Activated naive CD4-positive, alpha-beta T cell treated with anti-CD3 and anti-CD28 coated beads for 36 hours (primary cell): ENCODE measurements at regions of chr12 and their contacts with region 1.

Region 1: DNA sequence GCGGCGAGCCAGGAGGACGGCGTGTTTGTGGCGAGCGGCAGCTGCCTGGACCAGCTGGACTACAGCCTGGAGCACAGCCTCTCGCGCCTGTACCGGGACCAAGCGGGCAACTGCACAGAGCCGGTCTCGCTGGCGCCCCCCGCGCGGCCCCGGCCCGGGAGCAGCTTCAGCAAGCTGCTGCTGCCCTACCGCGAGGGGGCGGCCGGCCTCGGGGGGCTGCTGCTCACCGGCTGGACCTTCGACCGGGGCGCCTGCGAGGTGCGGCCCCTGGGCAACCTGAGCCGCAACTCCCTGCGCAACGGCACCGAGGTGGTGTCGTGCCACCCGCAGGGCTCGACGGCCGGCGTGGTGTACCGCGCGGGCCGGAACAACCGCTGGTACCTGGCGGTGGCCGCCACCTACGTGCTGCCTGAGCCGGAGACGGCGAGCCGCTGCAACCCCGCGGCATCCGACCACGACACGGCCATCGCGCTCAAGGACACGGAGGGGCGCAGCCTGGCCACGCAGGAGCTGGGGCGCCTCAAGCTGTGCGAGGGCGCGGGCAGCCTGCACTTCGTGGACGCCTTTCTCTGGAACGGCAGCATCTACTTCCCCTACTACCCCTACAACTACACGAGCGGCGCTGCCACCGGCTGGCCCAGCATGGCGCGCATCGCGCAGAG is 873 bp downstream of the PLXNC1 start:
- DNase-seq: peak; percentile 42
- H3K4me3 Mint-ChIP-seq: peak overlapping the region; percentile 80
- H3K27ac Mint-ChIP-seq: no peak overlapping the region
- H3K4me1 Mint-ChIP-seq: peaks cover 23% of the 10 kb centered on the region
- H3K27me3 Mint-ChIP-seq: peaks cover 9% of the 10 kb centered on the region

Region 2: DNA sequence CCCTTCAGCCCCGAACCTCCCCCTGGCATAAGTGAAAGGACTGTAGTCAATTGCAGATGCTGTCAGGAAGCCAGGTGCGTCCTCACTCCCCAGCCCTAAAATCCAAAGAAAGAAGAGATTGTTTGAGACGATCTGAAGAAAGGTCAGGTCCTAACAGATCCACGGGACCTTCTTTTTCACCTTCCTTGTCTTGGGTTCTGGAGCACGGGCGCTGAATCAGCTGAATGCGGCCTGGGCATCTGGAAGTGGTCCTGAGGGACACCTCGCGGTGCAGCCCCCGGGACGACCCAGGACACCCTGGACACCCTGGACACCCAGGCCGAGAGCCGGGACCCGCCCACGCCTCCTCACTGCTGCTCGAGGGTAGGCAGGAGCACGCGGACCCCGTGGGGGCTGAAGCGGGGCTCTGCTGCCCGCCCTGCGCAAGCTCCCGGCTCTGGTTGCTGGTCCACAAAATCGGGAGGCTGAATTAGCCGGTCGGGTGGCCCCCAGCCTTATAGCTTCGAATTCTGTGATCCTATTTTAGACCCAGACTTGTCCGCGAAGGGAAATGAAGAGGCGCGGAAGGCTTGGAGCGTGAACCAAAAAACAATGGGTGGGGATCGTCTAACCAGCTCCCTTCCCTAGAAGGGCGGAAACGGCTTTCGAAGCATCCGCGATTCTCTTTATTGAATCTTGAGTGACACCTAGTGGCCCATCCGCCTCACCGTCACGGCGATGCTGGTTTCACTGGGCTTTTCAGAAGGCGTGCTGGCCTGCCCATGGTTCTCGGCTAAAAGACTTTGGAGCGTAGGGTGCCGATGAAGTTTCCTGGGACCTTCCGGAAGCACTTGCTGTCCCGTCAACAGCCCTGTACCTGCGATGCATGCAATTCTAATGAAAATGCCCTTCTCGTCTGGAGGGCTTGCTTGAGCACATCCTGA is 47.3 kb before region 1 on chr12:
- CTCF ChIA-PET with region 1: no interaction called
- intact Hi-C with region 1: no loop called
- DNase-seq: peak; percentile 93
- H3K4me3 Mint-ChIP-seq: peak overlapping the region; percentile 78
- H3K27ac Mint-ChIP-seq: peak overlapping the region; percentile 7
- H3K4me1 Mint-ChIP-seq: peaks cover 16% of the 10 kb centered on the region
- H3K27me3 Mint-ChIP-seq: no peaks in the 10 kb centered on the region

Region 3: GRCh38 chr12:94222351-94223084 is 73.3 kb after region 1 on chr12:
- CTCF ChIA-PET with region 1: no interaction called
- intact Hi-C with region 1: no loop called
- DNase-seq: no peak
- H3K4me3 Mint-ChIP-seq: no peak overlapping the region
- H3K27ac Mint-ChIP-seq: no peak overlapping the region
- H3K4me1 Mint-ChIP-seq: no peaks in the 10 kb centered on the region
- H3K27me3 Mint-ChIP-seq: no peaks in the 10 kb centered on the region

Region 4: DNA sequence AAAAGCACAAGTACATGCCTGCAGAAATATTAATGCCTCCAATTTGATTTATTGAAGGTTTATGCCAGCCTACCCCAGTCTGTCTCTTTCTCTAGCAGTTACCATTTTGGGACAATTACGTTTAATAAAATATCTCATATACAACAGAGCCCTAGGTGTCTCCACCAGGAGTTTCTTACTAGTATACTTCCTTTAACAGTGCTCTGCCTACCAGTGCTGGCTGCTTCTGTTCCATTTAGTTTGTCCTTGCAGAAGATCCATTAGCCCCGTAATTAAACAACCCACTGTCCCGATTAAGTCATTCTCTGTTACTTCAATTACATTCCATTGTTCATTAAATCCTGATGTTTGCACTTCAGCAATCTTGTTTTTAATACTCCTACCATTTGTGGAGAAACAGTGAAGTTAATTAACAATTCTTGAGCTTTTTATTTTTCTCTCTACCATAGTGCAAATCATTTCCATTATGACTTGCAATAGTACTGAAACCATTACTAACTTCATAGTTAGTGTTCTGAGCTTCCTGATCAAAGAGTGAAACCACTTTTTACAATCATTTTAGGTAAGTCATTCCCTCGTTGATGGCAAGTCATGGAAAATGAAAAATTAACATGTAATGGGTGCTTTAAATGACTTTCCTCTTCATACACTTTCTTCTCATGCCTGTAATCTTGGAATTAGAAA is 120.2 kb after region 1 on chr12:
- CTCF ChIA-PET with region 1: interaction called, 3 read pairs
- intact Hi-C with region 1: loop called (anchors 1 kb)
- DNase-seq: no peak
- H3K4me3 Mint-ChIP-seq: no peak overlapping the region
- H3K27ac Mint-ChIP-seq: peak overlapping the region; percentile 30
- H3K4me1 Mint-ChIP-seq: peaks cover 46% of the 10 kb centered on the region
- H3K27me3 Mint-ChIP-seq: no peaks in the 10 kb centered on the region

Region 5: GRCh38 chr12:94372461-94372860 is 223.2 kb after region 1 on chr12:
- CTCF ChIA-PET with region 1: no interaction called
- intact Hi-C with region 1: loop called (anchors 1 kb)
- DNase-seq: peak; percentile 7
- H3K4me3 Mint-ChIP-seq: no peak overlapping the region
- H3K27ac Mint-ChIP-seq: peak overlapping the region; percentile 66
- H3K4me1 Mint-ChIP-seq: peaks cover 23% of the 10 kb centered on the region
- H3K27me3 Mint-ChIP-seq: no peaks in the 10 kb centered on the region

Region 6: GRCh38 chr12:94459728-94460615 is 310.7 kb after region 1 on chr12 and contains the start of gene CEP83:
- CTCF ChIA-PET with region 1: no interaction called
- intact Hi-C with region 1: loop called (anchors 1 kb)
- DNase-seq: peak; percentile 98
- H3K4me3 Mint-ChIP-seq: peak within 1 kb of the TSS; percentile 97
- H3K27ac Mint-ChIP-seq: peak within 1 kb of the TSS; percentile 91
- H3K4me1 Mint-ChIP-seq: peaks cover 29% of the 10 kb centered on the region
- H3K27me3 Mint-ChIP-seq: peaks cover 5% of the 10 kb centered on the region
- total RNA-seq, gene CEP83: 19.0 to 21.5 TPM

Region 7: DNA sequence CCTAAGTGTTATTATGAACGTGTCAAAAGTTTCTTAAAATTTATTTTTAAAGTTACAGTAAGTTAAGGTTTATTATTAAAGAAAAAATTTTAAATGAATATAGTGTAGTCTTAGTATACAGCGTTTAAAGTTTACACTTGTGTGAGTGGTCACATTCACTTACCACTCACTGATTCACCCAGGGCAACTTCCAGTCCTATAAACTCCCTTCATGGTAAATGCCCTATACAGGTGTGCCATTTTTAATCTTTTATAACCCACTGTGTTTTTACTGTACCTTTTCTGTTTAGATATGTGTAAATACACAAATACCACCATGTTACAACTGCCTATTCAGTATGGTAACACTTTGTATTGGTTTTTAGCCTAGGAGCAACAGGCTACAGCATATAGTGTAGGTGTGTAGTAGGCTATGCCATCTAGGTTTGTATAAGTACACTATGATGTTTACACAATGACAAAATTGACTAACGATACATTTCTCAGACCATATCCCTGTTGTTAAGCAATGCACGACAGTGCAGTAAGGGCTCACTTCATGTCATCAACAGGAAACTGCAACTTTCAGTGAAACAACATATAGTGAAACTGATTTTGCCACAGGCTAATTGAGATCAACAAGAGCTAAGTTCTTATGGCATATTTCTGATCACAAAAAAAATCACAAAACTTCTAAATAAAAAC is 613.2 kb after region 1 on chr12:
- CTCF ChIA-PET with region 1: no interaction called
- intact Hi-C with region 1: loop called (anchors 5 kb)
- DNase-seq: no peak
- H3K4me3 Mint-ChIP-seq: no peak overlapping the region
- H3K27ac Mint-ChIP-seq: no peak overlapping the region
- H3K4me1 Mint-ChIP-seq: peaks cover 2% of the 10 kb centered on the region
- H3K27me3 Mint-ChIP-seq: no peaks in the 10 kb centered on the region